Heart right ventricle (tissue), 16 donors: ENCODE measurements at regions of chr10 and their contacts with region 1.

Region 1: DNA sequence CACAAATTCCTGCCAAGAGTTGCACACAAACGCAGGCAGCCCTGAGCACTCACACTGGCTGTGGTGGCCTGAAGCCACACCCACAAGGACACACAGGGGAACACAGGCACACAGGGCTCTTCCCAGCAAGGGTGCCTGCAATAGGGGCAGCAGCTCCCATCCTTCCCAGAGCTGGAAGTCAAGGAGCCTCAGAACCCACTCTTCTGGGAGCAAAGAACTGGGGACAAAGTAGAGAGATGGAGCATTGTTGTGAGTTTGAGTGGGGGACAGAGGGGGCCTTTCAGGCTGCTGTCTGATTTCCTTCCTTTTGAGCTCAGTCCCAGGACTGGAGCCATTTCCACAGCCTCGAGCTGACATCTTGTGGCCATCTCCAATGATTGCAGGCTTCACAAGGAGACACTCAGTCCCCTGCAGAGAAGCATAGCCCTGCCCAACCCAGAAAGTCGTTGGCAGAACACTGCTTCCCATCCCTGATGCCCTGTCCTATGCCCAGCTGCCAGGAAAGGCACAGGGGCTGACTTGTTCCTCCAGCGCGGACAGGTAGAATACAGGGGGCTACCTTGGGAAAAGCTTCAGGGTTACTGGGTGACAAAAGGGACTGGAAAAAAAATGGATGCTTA is 34.4 kb upstream of the SLF2 start:
- DNase-seq: peak in 1 of 2 donors; percentile 35
- ATAC-seq: peak; percentile 69 to 88 (median 77)
- H3K4me3 ChIP-seq: no peak overlapping the region
- H3K27ac ChIP-seq: no peak overlapping the region
- H3K4me1 ChIP-seq: peaks cover 0 to 16% (median 3%) of the 10 kb centered on the region in 9 donors
- H3K27me3 ChIP-seq: peaks cover 0 to 61% (median 43%) of the 10 kb centered on the region in 7 donors
- CTCF ChIP-seq: peak in 8 of 9 donors; percentile 30 to 75 (median 64)

Region 2: GRCh38 chr10:100338434-100339036 is 539.9 kb before region 1 on chr10:
- intact Hi-C with region 1: loop called in 3 of 10 experiments (anchors 5 to 10 kb)
- DNase-seq: peak; percentile 72 to 75
- ATAC-seq: peak; percentile 53 to 80 (median 74)
- H3K4me3 ChIP-seq: no peak overlapping the region
- H3K27ac ChIP-seq: no peak overlapping the region
- H3K4me1 ChIP-seq: peaks cover 0 to 28% (median 0%) of the 10 kb centered on the region in 9 donors
- H3K27me3 ChIP-seq: peaks cover 0 to 30% (median 16%) of the 10 kb centered on the region in 7 donors
- CTCF ChIP-seq: peak; percentile 86 to 95 (median 92)

Region 3: DNA sequence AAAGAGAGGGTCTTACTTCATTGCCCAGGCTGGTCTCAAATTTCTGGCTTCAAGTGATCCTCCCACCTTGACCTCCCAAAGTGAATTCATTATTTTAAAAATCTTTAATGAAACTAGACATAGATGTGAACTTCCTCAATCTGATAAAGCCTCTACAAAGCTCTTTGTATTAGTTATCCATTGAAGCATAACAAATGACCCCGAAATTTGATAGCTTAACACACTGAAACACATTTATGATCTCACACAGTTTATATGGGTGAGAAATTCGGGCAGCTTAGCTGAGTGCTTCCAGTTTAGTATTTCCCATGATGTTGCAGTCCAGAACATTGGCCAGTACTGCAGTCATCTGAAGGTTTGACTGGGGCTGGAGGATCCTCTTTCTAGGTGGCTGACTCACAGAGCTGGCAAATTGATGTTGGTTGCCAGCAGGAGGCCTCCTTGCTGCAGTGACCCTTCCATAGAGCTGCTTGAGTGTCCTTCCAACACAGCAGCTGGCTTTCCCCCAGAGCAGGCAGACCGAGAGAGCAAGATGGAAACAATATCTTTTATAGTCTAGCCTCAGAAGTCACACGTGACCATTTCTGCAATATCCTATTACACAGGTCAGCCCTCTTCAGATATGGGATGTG is 432.2 kb before region 1 on chr10:
- intact Hi-C with region 1: loop called in 1 of 10 experiments (anchors 10 kb)
- DNase-seq: no peak
- ATAC-seq: no peak
- H3K4me3 ChIP-seq: no peak overlapping the region
- H3K27ac ChIP-seq: no peak overlapping the region
- H3K4me1 ChIP-seq: peaks cover 0 to 6% (median 0%) of the 10 kb centered on the region in 9 donors
- H3K27me3 ChIP-seq: peaks cover 0 to 15% (median 0%) of the 10 kb centered on the region in 7 donors
- CTCF ChIP-seq: no peak

Region 4: GRCh38 chr10:100562008-100562711 is 316.2 kb before region 1 on chr10:
- intact Hi-C with region 1: loop called (anchors 1 to 10 kb)
- DNase-seq: peak; percentile 17 to 62
- ATAC-seq: peak; percentile 72 to 89 (median 84)
- H3K4me3 ChIP-seq: peak overlapping the region in 5 of 10 donors; percentile 8 to 24 (median 14)
- H3K27ac ChIP-seq: no peak overlapping the region
- H3K4me1 ChIP-seq: peaks cover 0 to 15% (median 12%) of the 10 kb centered on the region in 9 donors
- H3K27me3 ChIP-seq: peaks cover 6 to 60% (median 56%) of the 10 kb centered on the region in 7 donors
- CTCF ChIP-seq: peak; percentile 57 to 88 (median 74)

Region 5: DNA sequence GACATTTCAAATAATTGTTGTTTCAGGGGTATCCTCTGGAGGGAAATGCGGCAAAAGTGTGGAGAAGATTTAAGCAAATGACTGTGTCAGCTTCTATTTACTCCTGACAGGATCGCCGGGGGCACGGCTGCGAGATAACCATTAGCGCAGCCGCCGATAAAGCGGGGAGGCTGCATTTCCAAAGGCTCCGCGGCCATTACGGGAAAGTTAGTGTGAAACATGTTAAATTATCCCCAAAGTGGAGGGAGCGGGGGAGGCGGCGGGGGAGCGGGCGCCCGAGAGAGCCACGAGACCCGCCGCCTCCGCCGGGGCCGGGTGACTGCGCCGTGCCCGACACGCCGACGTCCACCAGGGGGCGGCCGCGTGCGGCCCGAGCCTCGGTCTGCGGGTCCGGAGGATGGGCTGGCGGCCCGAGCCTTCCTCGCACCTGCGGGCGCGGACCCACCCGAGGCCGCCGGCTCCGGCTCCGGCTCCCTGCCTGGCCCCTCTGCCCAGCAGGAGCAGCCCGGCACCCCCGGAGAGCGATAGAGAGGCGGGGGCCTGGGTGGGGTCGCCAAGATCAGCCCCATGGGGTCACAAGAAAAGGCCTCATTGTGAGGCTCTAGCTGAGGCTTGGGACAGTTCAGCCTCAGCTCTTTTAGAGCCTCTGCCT is 207.4 kb before region 1 on chr10:
- intact Hi-C with region 1: loop called in 5 of 10 experiments (anchors 10 kb)
- DNase-seq: peak in 1 of 2 donors; percentile 37
- ATAC-seq: peak in 2 of 8 donors; percentile 55 to 64
- H3K4me3 ChIP-seq: no peak overlapping the region
- H3K27ac ChIP-seq: no peak overlapping the region
- H3K4me1 ChIP-seq: no peaks in the 10 kb centered on the region
- H3K27me3 ChIP-seq: peaks cover 15 to 97% (median 90%) of the 10 kb centered on the region in 7 donors
- CTCF ChIP-seq: peak; percentile 25 to 84 (median 59)

Region 6: GRCh38 chr10:100912605-100913469 is 34.4 kb after region 1 on chr10 and contains the start of gene SLF2:
- intact Hi-C with region 1: no loop called
- DNase-seq: peak; percentile 95 to 99
- ATAC-seq: peak; percentile 97 to 99 (median 98)
- H3K4me3 ChIP-seq: peak within 1 kb of the TSS; percentile 77 to 99 (median 94)
- H3K27ac ChIP-seq: peak within 1 kb of the TSS; percentile 88 to 99 (median 97)
- H3K4me1 ChIP-seq: peaks cover 0 to 50% (median 39%) of the 10 kb centered on the region in 9 donors
- H3K27me3 ChIP-seq: no peaks in the 10 kb centered on the region
- CTCF ChIP-seq: peak in 1 of 9 donors; percentile 5
- total RNA-seq, gene SLF2: 15.8 to 23.6 (median 18.7) TPM